Stomach (tissue), 19 donors: ENCODE measurements at regions of chr11 and their contacts with region 1.

Region 1: GRCh38 chr11:65512306-65512705 is 12.6 kb upstream of the SCYL1 start:
- DNase-seq: no peak
- H3K4me3 ChIP-seq: no peak overlapping the region
- H3K27ac ChIP-seq: no peak overlapping the region
- H3K4me1 ChIP-seq: peaks cover 5 to 28% (median 15%) of the 10 kb centered on the region in 4 donors
- H3K27me3 ChIP-seq: no peaks in the 10 kb centered on the region
- CTCF ChIP-seq: no peak
- EP300 ChIP-seq: no peak
- POLR2A ChIP-seq: no peak

Region 2: DNA sequence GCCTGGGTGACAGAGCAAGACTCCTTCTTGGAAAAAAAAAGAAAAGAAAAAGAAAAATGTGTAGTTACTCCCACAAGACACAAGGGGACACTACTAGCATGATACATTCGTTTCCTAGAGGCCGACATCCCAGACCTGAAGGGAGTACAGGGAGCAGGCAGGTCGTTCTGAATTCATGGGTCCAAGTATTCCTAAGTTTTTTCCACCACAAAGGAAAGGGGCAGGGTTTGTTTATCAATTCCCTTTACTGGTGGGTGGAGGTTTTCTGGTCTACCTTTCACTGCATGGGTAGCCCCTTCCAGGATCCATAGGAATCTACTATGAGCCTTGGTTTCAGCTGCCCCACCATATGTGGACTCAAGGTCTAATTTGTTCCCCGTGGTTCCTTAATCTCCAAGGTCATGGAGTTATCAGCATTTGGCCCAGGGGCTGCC is 145.9 kb before region 1 on chr11:
- intact Hi-C with region 1: loop called (anchors 5 kb)
- DNase-seq: peak in 1 of 2 donors; percentile 87
- H3K4me3 ChIP-seq: no peak overlapping the region
- H3K27ac ChIP-seq: peak overlapping the region in 4 of 5 donors; percentile 42 to 68 (median 44)
- H3K4me1 ChIP-seq: peaks cover 0 to 29% (median 27%) of the 10 kb centered on the region in 4 donors
- H3K27me3 ChIP-seq: no peaks in the 10 kb centered on the region
- CTCF ChIP-seq: peak in 5 of 7 experiments; percentile 55 to 91 (median 76)
- EP300 ChIP-seq: no peak
- POLR2A ChIP-seq: no peak

Region 3: GRCh38 chr11:65711785-65712632 is 199.7 kb after region 1 on chr11 and contains the start of gene KAT5:
- intact Hi-C with region 1: no loop called
- DNase-seq: peak; percentile 99
- H3K4me3 ChIP-seq: peak within 1 kb of the TSS; percentile 53 to 67 (median 60)
- H3K27ac ChIP-seq: peak within 1 kb of the TSS; percentile 98 to 100 (median 99)
- H3K4me1 ChIP-seq: peaks cover 20 to 33% (median 27%) of the 10 kb centered on the region in 4 donors
- H3K27me3 ChIP-seq: no peaks in the 10 kb centered on the region
- CTCF ChIP-seq: peak in 6 of 7 experiments; percentile 97 to 100 (median 98)
- EP300 ChIP-seq: no peak
- POLR2A ChIP-seq: peak in 2 of 4 donors; percentile 54 to 86
- total RNA-seq, gene KAT5: 13.3 to 99.1 (median 58.7) TPM

Region 4: DNA sequence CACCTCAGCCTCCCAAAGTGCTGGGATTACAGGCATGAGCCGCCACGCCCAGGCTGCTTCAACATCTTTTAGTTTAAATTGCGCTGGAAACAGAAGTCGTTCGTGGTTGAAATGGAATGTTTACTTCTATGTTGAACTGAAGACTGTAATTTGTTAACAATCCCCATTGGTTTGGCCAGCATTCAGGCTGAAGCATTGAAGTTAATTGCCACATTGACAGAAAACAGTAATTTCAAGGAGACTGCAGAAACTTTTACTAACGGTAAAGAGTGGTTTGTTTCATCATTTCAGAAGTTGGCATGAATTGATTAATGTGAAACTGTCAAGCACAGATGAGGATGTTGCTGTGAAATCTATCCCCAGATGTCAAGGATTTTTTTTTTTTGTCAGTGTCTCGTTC is 254.2 kb after region 1 on chr11:
- intact Hi-C with region 1: no loop called
- DNase-seq: no peak
- H3K4me3 ChIP-seq: no peak overlapping the region
- H3K27ac ChIP-seq: no peak overlapping the region
- H3K4me1 ChIP-seq: peaks cover 4 to 21% (median 7%) of the 10 kb centered on the region in 4 donors
- H3K27me3 ChIP-seq: no peaks in the 10 kb centered on the region
- CTCF ChIP-seq: no peak
- EP300 ChIP-seq: no peak
- POLR2A ChIP-seq: no peak